ENCODE measurements at regions of chr19 and their contacts with region 1.

Region 1: GRCh38 chr19:53195265-53195903 is 2.2 kb upstream of the ZNF665 start:
- DNase-seq: peak; percentile 8 to 39
- ATAC-seq: peak; percentile 47 to 53
- H3K4me3 ChIP-seq: no peak overlapping the region
- H3K27ac ChIP-seq: no peak overlapping the region
- H3K4me1 ChIP-seq: peaks cover 3 to 5% of the 10 kb centered on the region in 2 donors
- H3K27me3 ChIP-seq: no peaks in the 10 kb centered on the region
- CTCF ChIP-seq: peak; percentile 25 to 71 (median 62)
- POLR2A ChIP-seq: no peak

Region 2: GRCh38 chr19:53254411-53255341 is 59.3 kb after region 1 on chr19 and contains the start of gene ZNF677:
- in situ Hi-C with region 1: no loop called
- intact Hi-C with region 1: loop called (anchors 5 kb)
- DNase-seq: peak; percentile 73 to 78
- ATAC-seq: peak; percentile 87 to 97
- H3K4me3 ChIP-seq: peak within 1 kb of the TSS; percentile 72 to 91 (median 80)
- H3K27ac ChIP-seq: peak within 1 kb of the TSS; percentile 70 to 81 (median 74)
- H3K4me1 ChIP-seq: peaks cover 6 to 12% of the 10 kb centered on the region in 2 donors
- H3K27me3 ChIP-seq: peaks cover 0 to 3% (median 0%) of the 10 kb centered on the region in 3 donors
- CTCF ChIP-seq: no peak
- POLR2A ChIP-seq: peak; percentile 18 to 35
- total RNA-seq, gene ZNF677: 1.7 to 7.2 (median 4.8) TPM

Region 3: GRCh38 chr19:53365134-53365898 is 169.9 kb after region 1 on chr19 and contains the start of gene ZNF525:
- in situ Hi-C with region 1: no loop called
- intact Hi-C with region 1: loop called (anchors 5 kb)
- DNase-seq: peak; percentile 57 to 59
- ATAC-seq: peak; percentile 65 to 73
- H3K4me3 ChIP-seq: peak within 1 kb of the TSS; percentile 63 to 70 (median 67)
- H3K27ac ChIP-seq: peak within 1 kb of the TSS; percentile 37 to 64 (median 45)
- H3K4me1 ChIP-seq: no peaks in the 10 kb centered on the region
- H3K27me3 ChIP-seq: no peaks in the 10 kb centered on the region
- CTCF ChIP-seq: peak in 1 of 5 experiments; percentile 28
- POLR2A ChIP-seq: no peak
- total RNA-seq, gene ZNF525: 0.26 to 0.92 (median 0.30) TPM

Region 4: DNA sequence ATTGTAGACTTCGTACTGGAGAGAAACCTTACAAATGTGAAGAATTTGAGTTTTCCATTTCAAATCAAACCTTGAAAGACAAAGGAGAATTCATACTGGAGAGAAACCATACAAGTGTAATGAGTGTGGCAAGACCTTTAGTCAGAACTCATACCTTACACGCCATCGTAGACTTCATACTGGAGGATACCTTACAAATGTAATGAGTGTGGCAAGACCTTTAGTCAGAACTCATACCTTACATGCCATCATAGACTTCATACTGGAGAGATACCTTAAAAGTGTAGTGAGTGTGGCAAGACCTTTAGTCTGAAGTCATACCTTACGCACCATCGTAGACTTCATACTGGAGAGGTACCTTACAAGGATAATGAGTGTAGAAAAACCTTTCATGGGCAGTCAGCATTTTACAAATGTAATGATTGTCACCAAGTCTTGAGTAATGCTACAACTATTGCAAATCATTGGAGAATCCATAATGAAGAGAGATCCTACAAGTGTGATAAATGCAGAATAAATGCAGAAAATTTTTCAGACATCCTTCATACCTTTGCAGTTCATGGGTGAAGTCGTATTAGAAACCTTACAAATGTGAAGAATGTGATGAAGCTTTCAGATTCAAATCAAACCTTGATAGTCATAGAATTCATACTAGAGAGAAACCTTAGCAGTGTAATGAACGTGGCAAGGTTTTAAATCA is 214.3 kb after region 1 on chr19:
- in situ Hi-C with region 1: no loop called
- intact Hi-C with region 1: no loop called
- DNase-seq: no peak
- ATAC-seq: no peak
- H3K4me3 ChIP-seq: peak overlapping the region in 1 of 4 donors; percentile 24
- H3K27ac ChIP-seq: no peak overlapping the region
- H3K4me1 ChIP-seq: no peaks in the 10 kb centered on the region
- H3K27me3 ChIP-seq: no peaks in the 10 kb centered on the region
- CTCF ChIP-seq: no peak
- POLR2A ChIP-seq: no peak

Region 5: GRCh38 chr19:53467485-53468262 is 272.3 kb after region 1 on chr19 and contains the start of gene ZNF813:
- in situ Hi-C with region 1: no loop called
- intact Hi-C with region 1: loop called (anchors 10 kb)
- DNase-seq: peak; percentile 80 to 83
- ATAC-seq: peak; percentile 92 to 93
- H3K4me3 ChIP-seq: peak within 1 kb of the TSS; percentile 64 to 80 (median 74)
- H3K27ac ChIP-seq: peak within 1 kb of the TSS; percentile 43 to 73 (median 69)
- H3K4me1 ChIP-seq: peaks cover 0 to 10% of the 10 kb centered on the region in 2 donors
- H3K27me3 ChIP-seq: peaks cover 3 to 32% (median 4%) of the 10 kb centered on the region in 3 donors
- CTCF ChIP-seq: no peak
- POLR2A ChIP-seq: peak in 1 of 2 donors; percentile 22
- total RNA-seq, gene ZNF813: 0.29 to 1.1 (median 0.57) TPM

Region 6: GRCh38 chr19:54023191-54023590 is 827.8 kb after region 1 on chr19:
- in situ Hi-C with region 1: no loop called
- intact Hi-C with region 1: loop called (anchors 5 kb)
- DNase-seq: no peak
- ATAC-seq: no peak
- H3K4me3 ChIP-seq: no peak overlapping the region
- H3K27ac ChIP-seq: no peak overlapping the region
- H3K4me1 ChIP-seq: no peaks in the 10 kb centered on the region
- H3K27me3 ChIP-seq: peaks cover 0 to 4% (median 0%) of the 10 kb centered on the region in 3 donors
- CTCF ChIP-seq: no peak
- POLR2A ChIP-seq: no peak